PC-9 (cell line): ENCODE measurements at regions of chr3 and their contacts with region 1.

Region 1: DNA sequence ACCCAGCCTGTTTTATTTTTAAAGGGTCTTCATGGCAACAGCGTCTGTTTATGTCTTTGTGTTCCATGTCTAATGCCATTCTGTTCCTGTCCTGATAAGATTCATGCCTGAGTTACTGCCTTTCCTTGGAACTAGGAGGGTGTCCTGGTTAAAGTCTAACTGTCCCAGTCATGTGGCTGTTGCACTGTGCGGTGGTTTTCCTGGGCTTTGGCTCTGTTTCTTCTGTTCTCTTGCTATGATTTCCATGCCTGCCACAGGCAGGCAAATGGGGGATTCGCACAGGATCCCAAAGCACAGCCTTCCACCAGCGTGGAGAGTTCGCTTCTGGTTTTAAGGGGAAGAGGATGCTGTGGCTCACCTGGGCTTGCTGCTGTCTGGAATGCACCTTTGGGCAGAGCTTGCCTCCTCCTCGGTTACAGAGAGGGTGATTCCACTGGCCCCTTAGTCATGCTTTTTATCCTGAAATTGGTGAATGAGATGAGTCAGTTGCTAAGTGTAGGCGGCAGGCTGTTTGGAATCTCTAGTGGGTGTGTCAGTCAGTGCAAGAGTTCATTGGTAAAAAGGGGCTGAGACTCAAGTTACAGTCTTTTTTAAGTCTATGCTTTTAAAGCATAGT is 86.8 kb downstream of the CCK start:
- DNase-seq: peak; percentile 77 to 94
- H3K4me3 ChIP-seq: peak overlapping the region; percentile 26; the same call in 1 of the 2 replicates
- H3K27ac ChIP-seq: peak overlapping the region; percentile 76
- H3K4me1 ChIP-seq: peaks cover 20% of the 10 kb centered on the region
- H3K27me3 ChIP-seq: no peaks in the 10 kb centered on the region
- CTCF ChIP-seq: no peak

Region 2: DNA sequence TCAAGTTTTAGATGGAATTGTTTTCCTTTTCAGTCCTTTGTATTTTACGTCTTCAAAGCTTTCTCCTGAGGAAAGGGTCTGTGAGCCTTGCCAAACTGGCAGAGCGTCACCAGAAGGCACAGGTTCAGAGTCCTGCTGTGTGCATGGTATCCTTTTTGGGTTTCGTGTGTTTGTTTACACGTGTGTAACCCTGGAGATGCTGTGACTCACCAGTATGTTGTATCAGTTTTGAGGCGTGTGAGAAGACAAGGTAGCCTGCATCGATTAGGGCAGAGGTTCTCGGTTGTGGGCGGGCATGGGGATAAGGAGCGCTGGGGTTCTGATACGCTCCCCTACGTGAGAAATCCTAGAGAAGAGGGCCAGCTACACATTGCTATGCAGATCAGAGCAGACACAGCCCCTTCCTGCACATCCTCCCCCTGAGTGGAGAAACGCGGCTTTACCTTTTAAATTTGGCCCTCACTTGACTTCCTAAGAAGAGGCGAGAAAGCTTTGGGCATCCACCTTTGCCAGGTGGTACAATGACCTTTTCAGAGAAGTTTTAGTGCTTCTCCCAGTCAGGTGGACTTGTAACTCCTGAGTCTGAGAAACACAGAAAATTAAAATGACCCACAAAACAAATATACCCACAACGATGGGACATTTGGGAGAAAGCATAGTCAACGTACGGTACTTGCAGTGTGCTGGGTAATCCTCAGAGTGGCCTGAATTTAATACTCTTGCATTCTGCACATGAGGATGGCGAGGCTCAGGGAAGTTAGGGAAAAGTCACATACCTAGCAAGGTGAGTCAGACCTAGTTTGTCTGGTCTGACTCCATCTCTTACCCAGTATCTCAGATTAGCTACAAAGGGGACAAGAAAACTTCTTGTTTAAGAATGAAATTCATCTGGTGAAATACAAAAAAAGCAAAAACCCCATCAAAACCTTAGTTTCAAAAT is 49.9 kb before region 1 on chr3:
- CTCF ChIA-PET with region 1: no interaction called
- POLR2A ChIA-PET with region 1: no interaction called
- intact Hi-C with region 1: loop called (anchors 1 kb)
- DNase-seq: peak; percentile 58 to 92
- H3K4me3 ChIP-seq: peak overlapping the region; percentile 50
- H3K27ac ChIP-seq: peak overlapping the region; percentile 97
- H3K4me1 ChIP-seq: peaks cover 42% of the 10 kb centered on the region
- H3K27me3 ChIP-seq: no peaks in the 10 kb centered on the region
- CTCF ChIP-seq: no peak

Region 3: GRCh38 chr3:42134877-42135464 is 44.2 kb before region 1 on chr3:
- CTCF ChIA-PET with region 1: no interaction called
- POLR2A ChIA-PET with region 1: no interaction called
- intact Hi-C with region 1: loop called (anchors 2 kb)
- DNase-seq: peak; percentile 58 to 72
- H3K4me3 ChIP-seq: no peak overlapping the region
- H3K27ac ChIP-seq: peak overlapping the region; percentile 17; the same call in 1 of the 2 replicates
- H3K4me1 ChIP-seq: peaks cover 26% of the 10 kb centered on the region
- H3K27me3 ChIP-seq: no peaks in the 10 kb centered on the region
- CTCF ChIP-seq: no peak

Region 4: DNA sequence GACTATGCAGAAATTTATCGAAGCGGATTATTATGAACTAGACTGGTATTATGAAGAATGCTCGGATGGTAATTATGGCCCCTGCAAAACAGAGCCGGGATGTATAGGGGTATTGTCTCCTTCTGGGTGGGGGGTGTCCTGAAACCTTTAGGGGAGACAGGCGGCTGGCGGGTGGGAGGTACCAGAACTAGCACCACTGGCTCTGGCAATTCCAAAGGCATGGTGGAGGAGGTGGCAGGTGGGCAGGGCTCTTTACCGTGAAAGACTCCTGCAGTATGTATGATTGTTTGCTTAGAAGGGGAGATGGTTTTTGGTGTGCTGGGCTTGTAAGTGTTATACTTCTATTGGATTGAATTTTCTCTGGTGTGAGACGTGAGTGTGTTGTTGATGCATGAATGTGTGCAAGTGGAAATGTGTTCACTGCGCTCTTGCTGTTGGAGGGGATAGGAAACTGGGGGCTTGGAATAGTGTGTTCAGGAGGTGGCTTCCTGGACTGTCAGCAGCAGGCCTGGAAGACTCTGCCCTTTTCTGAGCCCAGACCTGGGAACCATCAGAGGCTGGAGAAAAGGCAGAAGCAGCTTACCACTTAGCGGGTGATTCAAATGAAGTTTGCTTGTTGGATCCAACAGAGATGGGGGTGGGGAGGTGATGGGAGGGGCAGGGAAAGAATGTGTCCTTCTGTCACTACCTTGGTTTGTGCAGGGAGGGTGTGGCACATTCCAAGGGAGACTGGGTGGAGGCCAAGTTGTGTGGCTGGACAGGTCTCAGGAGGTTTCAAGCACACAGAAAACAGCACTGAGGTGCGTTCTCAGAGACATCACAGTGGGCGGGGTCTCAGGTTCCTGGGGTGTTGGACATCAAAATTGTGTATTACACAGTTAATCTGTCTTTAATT is 29.4 kb before region 1 on chr3:
- CTCF ChIA-PET with region 1: no interaction called
- POLR2A ChIA-PET with region 1: no interaction called
- intact Hi-C with region 1: loop called (anchors 1 kb)
- DNase-seq: peak; percentile 89 to 91
- H3K4me3 ChIP-seq: no peak overlapping the region
- H3K27ac ChIP-seq: peak overlapping the region; percentile 82
- H3K4me1 ChIP-seq: peaks cover 29% of the 10 kb centered on the region
- H3K27me3 ChIP-seq: no peaks in the 10 kb centered on the region
- CTCF ChIP-seq: no peak

Region 5: DNA sequence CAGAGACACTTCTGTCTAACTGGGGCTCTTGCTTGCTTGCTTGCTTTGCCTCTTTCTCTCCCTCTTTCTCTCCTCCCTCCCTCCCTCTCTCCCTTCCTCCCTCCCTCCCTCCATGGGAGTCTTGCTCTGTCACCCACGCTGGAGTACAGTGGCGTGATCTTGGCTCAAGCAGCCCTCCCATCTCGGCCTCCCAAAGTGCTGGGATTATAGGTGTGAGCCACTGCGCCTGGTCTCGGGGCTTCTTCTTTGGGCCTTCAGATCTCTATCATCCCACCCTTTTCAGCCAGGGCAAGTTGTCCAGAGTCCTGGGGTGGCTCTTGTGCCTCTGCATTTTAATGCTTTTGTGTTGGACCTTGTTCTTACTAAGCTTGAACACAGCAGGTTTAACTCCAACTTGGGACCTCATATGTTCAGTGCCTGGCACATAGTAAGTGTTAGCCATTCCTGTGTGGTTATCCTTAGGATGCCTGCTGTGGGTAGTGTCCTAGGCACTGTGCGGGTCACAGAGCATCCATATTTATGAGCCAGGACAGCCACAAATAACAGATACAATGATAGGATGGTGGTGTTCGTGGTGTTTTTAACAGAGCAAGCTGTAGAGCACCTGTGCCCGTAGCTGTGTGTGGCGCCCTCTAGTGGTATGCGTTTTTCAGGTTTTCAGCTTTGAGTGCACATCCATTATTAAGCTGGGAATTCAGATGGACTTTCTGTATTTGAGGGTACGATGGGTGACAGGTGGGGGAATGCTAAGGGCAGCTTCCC is 11.7 kb after region 1 on chr3:
- CTCF ChIA-PET with region 1: interaction called, 10 read pairs
- POLR2A ChIA-PET with region 1: no interaction called
- intact Hi-C with region 1: no loop called
- DNase-seq: peak; percentile 45 to 66
- H3K4me3 ChIP-seq: no peak overlapping the region
- H3K27ac ChIP-seq: no peak overlapping the region
- H3K4me1 ChIP-seq: no peaks in the 10 kb centered on the region
- H3K27me3 ChIP-seq: no peaks in the 10 kb centered on the region
- CTCF ChIP-seq: peak; percentile 88

Region 6: GRCh38 chr3:42314411-42314810 is 135.2 kb after region 1 on chr3:
- CTCF ChIA-PET with region 1: no interaction called
- POLR2A ChIA-PET with region 1: no interaction called
- intact Hi-C with region 1: no loop called
- DNase-seq: no peak
- H3K4me3 ChIP-seq: no peak overlapping the region
- H3K27ac ChIP-seq: no peak overlapping the region
- H3K4me1 ChIP-seq: no peaks in the 10 kb centered on the region
- H3K27me3 ChIP-seq: no peaks in the 10 kb centered on the region
- CTCF ChIP-seq: no peak